ENCODE measurements at regions of chr13 and their contacts with region 1.

Region 1: GRCh38 chr13:27533155-27533643 is 82.8 kb upstream of the MTIF3 start:
- DNase-seq: peak; percentile 78
- H3K4me3 ChIP-seq: no peak overlapping the region
- H3K27ac ChIP-seq: no peak overlapping the region
- H3K4me1 ChIP-seq: no peaks in the 10 kb centered on the region
- H3K27me3 ChIP-seq: no peaks in the 10 kb centered on the region
- CTCF ChIP-seq: peak; percentile 65 to 89 (median 84)
- POLR2A ChIP-seq: no peak

Region 2: DNA sequence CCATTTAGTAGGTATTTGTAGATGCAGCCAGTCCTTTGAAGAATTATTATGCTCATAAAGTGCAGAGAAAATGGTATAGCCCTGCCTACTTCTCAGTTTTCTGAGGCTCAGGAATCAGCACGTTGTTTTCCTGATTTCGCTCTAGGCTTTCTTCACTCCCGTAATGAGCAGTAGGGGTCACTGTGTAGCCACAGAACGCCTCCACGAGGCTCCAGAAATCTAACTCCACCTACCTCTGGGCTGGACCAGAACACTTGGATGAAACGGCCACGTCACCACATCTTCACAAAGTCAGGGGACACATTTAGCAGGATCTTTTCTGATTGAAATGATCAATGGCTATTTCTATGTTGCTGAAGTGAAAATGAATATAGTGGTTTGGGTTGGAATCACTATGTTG is 158.5 kb before region 1 on chr13:
- intact Hi-C with region 1: loop called (anchors 10 kb)
- DNase-seq: peak; percentile 56
- H3K4me3 ChIP-seq: no peak overlapping the region
- H3K27ac ChIP-seq: no peak overlapping the region
- H3K4me1 ChIP-seq: no peaks in the 10 kb centered on the region
- H3K27me3 ChIP-seq: no peaks in the 10 kb centered on the region
- CTCF ChIP-seq: peak in 3 of 4 experiments; percentile 55 to 76 (median 74)
- POLR2A ChIP-seq: no peak

Region 3: DNA sequence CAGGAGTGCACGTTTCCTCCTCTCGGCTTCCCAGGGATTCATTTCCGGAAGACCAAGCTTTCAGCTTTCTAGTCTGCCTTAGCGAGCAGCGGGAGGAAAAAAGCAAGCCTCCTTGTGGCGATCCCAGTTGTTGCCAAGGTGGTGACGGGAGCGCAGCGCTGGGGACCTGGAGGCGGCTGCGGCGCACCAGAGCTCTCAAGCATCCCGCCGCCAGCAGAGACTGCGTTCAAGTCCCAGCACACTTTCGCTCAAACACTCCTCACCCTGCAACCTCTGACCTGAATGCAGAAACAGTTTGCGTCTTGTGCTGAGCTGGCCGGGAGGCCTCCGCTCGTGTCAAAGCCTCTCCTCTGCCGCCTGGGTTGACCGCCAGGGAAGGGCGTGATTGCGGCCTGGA is 264.0 kb after region 1 on chr13:
- intact Hi-C with region 1: no loop called
- DNase-seq: no peak
- H3K4me3 ChIP-seq: no peak overlapping the region
- H3K27ac ChIP-seq: no peak overlapping the region
- H3K4me1 ChIP-seq: peaks cover 6% of the 10 kb centered on the region
- H3K27me3 ChIP-seq: peaks cover 54% of the 10 kb centered on the region
- CTCF ChIP-seq: no peak
- POLR2A ChIP-seq: no peak

Region 4: DNA sequence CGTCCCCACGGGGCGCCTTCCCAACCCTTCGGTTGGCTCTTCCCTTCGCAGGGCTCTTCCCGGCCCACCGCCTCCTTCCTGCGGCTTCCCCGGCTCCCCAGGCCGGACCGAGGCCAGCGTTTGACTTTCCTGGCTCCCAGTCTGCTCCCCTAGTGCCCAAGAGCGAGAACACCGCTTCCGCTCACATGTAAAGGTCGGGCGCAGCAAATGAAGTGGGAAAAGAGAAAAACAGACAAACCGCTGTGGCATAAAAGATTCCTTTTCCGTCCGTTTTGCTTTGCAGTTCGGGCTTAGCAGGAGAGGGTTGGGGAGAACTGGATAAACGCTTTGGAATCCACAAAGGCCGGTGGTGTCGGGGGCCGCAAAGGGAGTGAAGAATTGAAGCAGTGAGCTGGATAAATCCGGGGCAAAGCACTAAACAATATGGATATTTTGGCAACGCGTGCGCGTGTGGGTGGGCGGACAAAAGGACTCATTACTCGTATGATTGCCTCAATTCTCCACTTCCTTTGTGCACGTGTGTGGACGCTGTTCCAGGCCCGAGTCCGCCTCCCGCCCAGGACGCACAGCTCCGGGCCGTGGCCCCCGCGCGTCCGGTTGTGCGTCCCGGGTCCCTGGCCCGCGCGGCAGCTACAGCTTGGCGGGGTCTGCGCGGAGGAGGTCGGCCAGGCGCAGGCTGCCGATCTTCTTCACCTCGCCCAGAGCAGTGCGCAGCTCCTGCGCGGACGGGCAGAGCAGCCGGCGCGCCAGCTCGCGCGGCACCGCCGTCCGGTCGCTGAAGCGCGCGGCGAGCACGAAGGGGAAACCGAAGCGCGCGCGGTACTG is 444.5 kb after region 1 on chr13:
- intact Hi-C with region 1: loop called (anchors 10 kb)
- DNase-seq: no peak
- H3K4me3 ChIP-seq: no peak overlapping the region
- H3K27ac ChIP-seq: no peak overlapping the region
- H3K4me1 ChIP-seq: no peaks in the 10 kb centered on the region
- H3K27me3 ChIP-seq: peaks cover 69% of the 10 kb centered on the region
- CTCF ChIP-seq: no peak
- POLR2A ChIP-seq: no peak